ENCODE measurements at regions of chr7 and their contacts with region 1.

Region 1: GRCh38 chr7:22841954-22842353 is 19.3 kb upstream of the TOMM7 start:
- DNase-seq: peak; percentile 87

Region 2: DNA sequence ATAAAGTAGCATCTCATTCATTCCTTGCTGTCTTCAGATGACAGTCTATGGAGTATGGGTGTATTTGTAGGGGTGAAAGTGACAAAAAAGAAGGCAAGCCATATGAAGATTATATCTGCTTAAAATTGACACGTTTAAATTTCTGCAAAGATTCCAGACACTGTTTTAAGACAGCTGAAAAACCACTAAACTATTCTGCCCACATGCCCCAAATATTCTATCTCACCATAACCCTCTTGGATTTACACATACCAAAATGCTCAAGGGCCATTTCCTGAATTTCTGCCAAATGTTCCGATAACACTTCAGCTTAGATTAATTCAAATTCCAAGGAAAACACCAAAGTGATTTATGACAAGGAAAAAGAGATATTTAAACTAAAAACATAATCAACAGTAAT is 214.8 kb before region 1 on chr7:
- intact Hi-C with region 1: loop called in 1 of 2 experiments (anchors 10 kb)
- DNase-seq: no peak

Region 3: DNA sequence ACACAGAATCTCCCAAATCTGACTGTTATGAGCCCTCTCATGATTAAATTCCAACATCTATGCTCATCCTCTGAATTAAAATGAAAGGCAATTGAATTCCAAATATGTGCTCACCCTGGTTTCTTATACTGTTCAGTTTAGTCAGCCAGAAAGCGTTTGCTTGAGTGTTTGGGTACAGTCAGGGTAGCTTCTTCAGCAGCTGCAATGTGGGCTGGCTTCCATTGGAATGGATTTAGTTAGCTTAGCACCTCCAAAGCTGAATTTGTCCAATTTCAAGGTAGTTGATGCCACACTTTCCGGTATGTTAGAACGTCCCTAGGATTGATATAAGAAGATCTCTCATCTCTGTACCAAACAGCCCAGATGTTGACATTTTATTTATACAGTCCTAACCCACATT is 272.9 kb after region 1 on chr7:
- intact Hi-C with region 1: no loop called
- DNase-seq: no peak